Ovary (tissue), 10 donors: ENCODE measurements at regions of chr13 and their contacts with region 1.

Region 1: DNA sequence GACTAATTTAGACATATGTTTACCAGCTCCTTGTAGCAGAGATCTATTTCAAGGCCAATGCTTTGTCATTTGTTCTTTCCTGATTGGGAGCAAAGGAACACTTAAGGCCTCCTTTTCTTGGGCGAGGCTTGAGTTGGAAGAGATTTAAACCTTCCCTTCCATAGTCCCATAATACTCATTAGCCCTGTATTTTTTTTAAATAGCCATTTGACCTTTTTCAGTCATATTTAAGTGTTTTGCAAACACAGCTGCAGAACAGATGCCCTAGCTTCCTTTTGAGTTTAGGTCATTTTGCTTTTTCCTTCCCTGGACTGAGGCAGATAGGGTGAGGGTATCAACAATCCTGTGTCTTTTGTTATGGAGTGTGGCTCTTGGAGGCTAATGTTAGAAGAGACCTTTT is 198.3 kb downstream of the NBEA start:
- DNase-seq: no peak
- H3K4me3 ChIP-seq: no peak overlapping the region
- H3K27ac ChIP-seq: no peak overlapping the region
- H3K4me1 ChIP-seq: no peaks in the 10 kb centered on the region
- H3K27me3 ChIP-seq: no peaks in the 10 kb centered on the region
- CTCF ChIP-seq: no peak
- EP300 ChIP-seq: no peak
- POLR2A ChIP-seq: no peak

Region 2: DNA sequence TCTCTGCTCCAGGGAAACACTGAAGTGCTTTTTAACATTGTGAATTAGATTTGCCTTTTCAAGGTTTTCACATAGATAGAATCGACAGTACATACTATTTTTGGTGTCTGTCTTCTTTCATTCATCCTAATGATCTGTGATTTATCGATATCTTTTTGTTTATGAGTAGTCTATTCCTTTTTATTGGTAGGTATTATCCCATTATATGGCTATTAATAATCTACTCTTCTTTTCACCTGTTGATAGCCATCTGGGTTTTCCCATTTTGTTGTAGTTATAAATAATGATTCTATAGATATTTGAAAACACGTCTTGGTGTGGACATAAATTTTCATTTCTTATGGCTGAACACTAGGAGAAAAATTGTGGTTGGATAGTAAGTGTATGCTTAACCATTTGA is 73.6 kb after region 1 on chr13:
- intact Hi-C with region 1: loop called in 1 of 4 experiments (anchors 2 kb)
- DNase-seq: no peak
- H3K4me3 ChIP-seq: no peak overlapping the region
- H3K27ac ChIP-seq: no peak overlapping the region
- H3K4me1 ChIP-seq: no peaks in the 10 kb centered on the region
- H3K27me3 ChIP-seq: no peaks in the 10 kb centered on the region
- CTCF ChIP-seq: no peak
- EP300 ChIP-seq: no peak
- POLR2A ChIP-seq: no peak